ENCODE measurements at regions of chr6 and their contacts with region 1.

Region 1: GRCh38 chr6:2209226-2209809 is 36.1 kb downstream of the GMDS start:
- DNase-seq: no peak
- H3K4me3 ChIP-seq: no peak overlapping the region
- CTCF ChIP-seq: peak; percentile 50

Region 2: GRCh38 chr6:2196079-2196679 is 13.1 kb before region 1 on chr6:
- CTCF ChIA-PET with region 1: interaction called, 12 read pairs
- POLR2A ChIA-PET with region 1: no interaction called
- DNase-seq: no peak
- H3K4me3 ChIP-seq: no peak overlapping the region
- CTCF ChIP-seq: peak; percentile 55

Measured in AG04449 (cell line).